Right cardiac atrium (tissue), 5 donors: ENCODE measurements at regions of chr13 and their contacts with region 1.

Region 1: GRCh38 chr13:20924758-20925394 is 22.3 kb upstream of the XPO4 start:
- DNase-seq: peak; percentile 76 to 88 (median 78)
- ATAC-seq: peak in 1 of 2 donors; percentile 57
- H3K4me3 ChIP-seq: no peak overlapping the region
- H3K27ac ChIP-seq: no peak overlapping the region
- H3K4me1 ChIP-seq: no peaks in the 10 kb centered on the region
- H3K27me3 ChIP-seq: no peaks in the 10 kb centered on the region

Region 2: GRCh38 chr13:20182231-20182846 is 742.5 kb before region 1 on chr13:
- intact Hi-C with region 1: loop called in 1 of 4 experiments (anchors 10 kb)
- DNase-seq: no peak
- ATAC-seq: peak; percentile 76 to 77
- H3K4me3 ChIP-seq: no peak overlapping the region
- H3K27ac ChIP-seq: no peak overlapping the region
- H3K4me1 ChIP-seq: no peaks in the 10 kb centered on the region
- H3K27me3 ChIP-seq: no peaks in the 10 kb centered on the region

Region 3: DNA sequence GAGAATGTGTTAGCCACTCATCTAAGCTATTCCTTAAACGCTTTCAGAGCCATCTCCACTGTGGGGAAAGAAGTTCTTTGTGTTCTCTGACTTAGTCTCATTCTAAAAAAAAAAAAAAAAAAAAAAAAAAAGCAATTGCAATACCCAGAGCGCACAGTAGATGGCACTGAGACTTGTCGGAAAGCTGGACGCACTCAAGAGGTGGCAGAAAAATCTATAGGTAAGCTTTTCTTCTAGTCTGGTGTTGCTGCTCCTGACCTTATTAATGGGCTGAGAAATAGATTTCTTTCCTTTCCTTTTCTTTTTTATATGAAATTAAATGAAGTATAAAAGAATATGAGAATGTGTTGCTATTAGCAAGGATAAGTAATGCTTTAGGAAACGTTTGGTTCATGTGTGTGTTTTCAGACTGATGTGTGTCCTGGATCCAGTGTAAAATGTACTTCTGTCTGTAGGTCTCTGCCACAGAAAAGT is 727.5 kb before region 1 on chr13:
- intact Hi-C with region 1: loop called in 1 of 4 experiments (anchors 10 kb)
- DNase-seq: no peak
- ATAC-seq: peak in 1 of 2 donors; percentile 41
- H3K4me3 ChIP-seq: no peak overlapping the region
- H3K27ac ChIP-seq: no peak overlapping the region
- H3K4me1 ChIP-seq: no peaks in the 10 kb centered on the region
- H3K27me3 ChIP-seq: no peaks in the 10 kb centered on the region

Region 4: DNA sequence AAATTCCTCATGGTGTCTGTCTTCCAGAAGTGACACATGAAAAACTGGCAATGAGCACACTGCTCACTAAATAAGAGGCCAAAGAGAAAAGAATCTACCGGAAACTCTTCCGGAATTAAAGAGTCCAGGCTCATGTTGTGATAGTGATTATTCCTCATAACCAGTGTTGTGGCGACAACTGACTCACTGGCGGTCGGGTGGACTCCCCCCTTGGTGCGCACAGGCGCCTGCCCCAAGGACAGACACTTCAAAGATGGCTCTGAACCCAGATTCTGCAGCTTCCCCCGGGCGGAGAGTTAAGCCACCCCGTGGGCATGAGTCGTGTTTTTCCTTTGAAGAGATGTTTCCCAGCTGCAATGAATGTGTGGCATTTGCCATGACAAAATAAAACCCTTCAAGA is 211.1 kb before region 1 on chr13:
- intact Hi-C with region 1: loop called in 3 of 4 experiments (anchors 5 to 10 kb)
- DNase-seq: peak; percentile 63 to 73 (median 71)
- ATAC-seq: peak; percentile 38 to 65
- H3K4me3 ChIP-seq: no peak overlapping the region
- H3K27ac ChIP-seq: peak overlapping the region; percentile 11
- H3K4me1 ChIP-seq: no peaks in the 10 kb centered on the region
- H3K27me3 ChIP-seq: no peaks in the 10 kb centered on the region

Region 5: DNA sequence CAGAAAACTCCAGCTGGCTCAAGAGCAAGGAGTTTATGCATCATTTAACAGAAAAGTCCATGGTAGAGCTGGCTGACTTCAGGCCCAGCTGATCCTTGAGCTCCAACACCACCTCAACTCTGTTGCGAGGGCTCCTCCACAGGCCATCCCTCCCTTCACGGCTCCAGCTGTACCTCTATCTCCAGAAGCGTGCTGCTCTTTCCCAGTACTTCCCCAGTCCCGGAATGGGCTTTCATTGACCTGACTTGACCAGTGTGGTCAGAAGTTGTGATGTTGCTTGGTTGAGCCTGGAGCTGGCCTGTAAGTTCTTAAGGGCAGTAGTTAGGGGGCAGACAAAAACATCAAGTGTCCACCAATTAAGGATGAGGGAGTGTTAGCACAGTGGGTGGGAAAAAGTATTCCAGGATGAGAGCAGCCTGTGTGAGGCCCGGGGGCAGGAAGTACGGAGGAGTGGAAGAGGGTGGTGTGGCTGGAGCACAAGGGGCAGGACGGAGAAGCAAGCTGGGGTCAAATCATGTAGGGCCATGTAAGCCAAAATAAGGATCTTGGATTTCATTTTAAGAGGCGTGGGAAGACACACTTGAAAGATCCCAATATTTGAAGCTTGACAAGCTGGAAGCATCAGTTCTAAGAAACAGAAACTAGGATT is 227.5 kb after region 1 on chr13:
- intact Hi-C with region 1: no loop called
- DNase-seq: peak in 1 of 3 donors; percentile 31
- ATAC-seq: no peak
- H3K4me3 ChIP-seq: no peak overlapping the region
- H3K27ac ChIP-seq: no peak overlapping the region
- H3K4me1 ChIP-seq: no peaks in the 10 kb centered on the region
- H3K27me3 ChIP-seq: no peaks in the 10 kb centered on the region